ENCODE measurements at regions of chr14 and their contacts with region 1.

Region 1: DNA sequence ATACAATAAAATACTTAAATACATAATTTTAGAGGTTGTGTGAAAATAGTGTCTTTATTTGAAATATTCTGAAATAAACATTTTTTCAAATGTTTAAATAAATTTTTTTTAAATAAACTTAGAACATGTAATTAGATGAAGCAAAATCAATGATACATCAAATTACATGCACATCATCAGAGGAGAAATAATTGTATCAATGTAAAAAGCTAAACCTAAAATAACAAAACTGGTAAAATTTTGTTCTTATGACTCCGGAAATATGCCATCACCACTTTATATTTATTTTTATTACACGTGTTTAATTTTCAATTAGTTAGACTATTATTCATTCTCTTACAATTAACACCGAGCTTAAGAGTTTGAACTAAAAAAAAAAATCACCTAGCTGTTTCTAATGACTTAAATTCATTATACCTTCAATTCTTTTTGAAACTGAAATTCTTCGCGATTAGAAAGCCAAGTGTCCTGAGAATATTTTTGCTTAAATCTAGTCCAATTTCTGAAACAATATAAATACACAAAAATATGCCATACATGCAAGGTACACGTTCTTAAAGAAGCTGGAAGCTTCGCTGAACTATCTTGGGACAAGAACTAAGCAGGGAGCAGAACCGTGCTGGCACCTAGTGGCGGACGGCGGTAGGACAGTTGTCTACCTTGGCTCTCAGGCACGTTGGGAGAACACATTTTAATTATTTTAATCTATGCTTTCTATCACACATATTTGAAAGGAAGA is 230.5 kb downstream of the SLC25A21 start:
- DNase-seq: peak; percentile 67 to 82
- H3K4me3 ChIP-seq: no peak overlapping the region
- H3K4me3 Mint-ChIP-seq: no peak overlapping the region
- H3K27ac Mint-ChIP-seq: peak overlapping the region; percentile 58
- H3K4me1 ChIP-seq: peaks cover 12% of the 10 kb centered on the region
- H3K4me1 Mint-ChIP-seq: peaks cover 12% of the 10 kb centered on the region
- H3K27me3 ChIP-seq: no peaks in the 10 kb centered on the region
- H3K27me3 Mint-ChIP-seq: no peaks in the 10 kb centered on the region
- CTCF ChIP-seq: peak; percentile 94 to 95

Region 2: GRCh38 chr14:36553656-36554260 is 388.2 kb before region 1 on chr14:
- CTCF ChIA-PET with region 1: interaction called, 17 read pairs
- POLR2A ChIA-PET with region 1: no interaction called
- intact Hi-C with region 1: no loop called
- DNase-seq: peak in 1 of 2 experiments; percentile 48
- H3K4me3 ChIP-seq: no peak overlapping the region
- H3K4me3 Mint-ChIP-seq: no peak overlapping the region
- H3K27ac Mint-ChIP-seq: no peak overlapping the region
- H3K4me1 ChIP-seq: no peaks in the 10 kb centered on the region
- H3K4me1 Mint-ChIP-seq: no peaks in the 10 kb centered on the region
- H3K27me3 ChIP-seq: no peaks in the 10 kb centered on the region
- H3K27me3 Mint-ChIP-seq: no peaks in the 10 kb centered on the region
- CTCF ChIP-seq: peak; percentile 65 to 80

Region 3: GRCh38 chr14:36647824-36648753 is 293.9 kb before region 1 on chr14:
- CTCF ChIA-PET with region 1: interaction called, 69 read pairs
- POLR2A ChIA-PET with region 1: interaction called, 4 read pairs
- intact Hi-C with region 1: loop called (anchors 1 kb)
- DNase-seq: peak; percentile 71 to 81
- H3K4me3 ChIP-seq: peak overlapping the region; percentile 59
- H3K4me3 Mint-ChIP-seq: peak overlapping the region; percentile 92
- H3K27ac Mint-ChIP-seq: peak overlapping the region; percentile 85
- H3K4me1 ChIP-seq: 0 out of 2 replicates have a peak, but pooled peaks cover 4% of the 10 kb centered on the region
- H3K4me1 Mint-ChIP-seq: peaks cover 6% of the 10 kb centered on the region
- H3K27me3 ChIP-seq: no peaks in the 10 kb centered on the region; the same call in 1 of the 2 replicates
- H3K27me3 Mint-ChIP-seq: no peaks in the 10 kb centered on the region
- CTCF ChIP-seq: peak; percentile 71 to 72

Region 4: GRCh38 chr14:36655963-36656686 is 285.8 kb before region 1 on chr14:
- CTCF ChIA-PET with region 1: interaction called, 18 read pairs
- POLR2A ChIA-PET with region 1: no interaction called
- intact Hi-C with region 1: loop called (anchors 1 kb)
- DNase-seq: peak; percentile 61 to 71
- H3K4me3 ChIP-seq: peak overlapping the region; percentile 41
- H3K4me3 Mint-ChIP-seq: peak overlapping the region; percentile 68
- H3K27ac Mint-ChIP-seq: no peak overlapping the region
- H3K4me1 ChIP-seq: 0 out of 2 replicates have a peak, but pooled peaks cover 5% of the 10 kb centered on the region
- H3K4me1 Mint-ChIP-seq: no peaks in the 10 kb centered on the region
- H3K27me3 ChIP-seq: no peaks in the 10 kb centered on the region
- H3K27me3 Mint-ChIP-seq: no peaks in the 10 kb centered on the region
- CTCF ChIP-seq: peak; percentile 50 to 64

Region 5: GRCh38 chr14:36661756-36662498 is 280.0 kb before region 1 on chr14 and contains the start of gene PAX9:
- CTCF ChIA-PET with region 1: interaction called, 18 read pairs
- POLR2A ChIA-PET with region 1: no interaction called
- intact Hi-C with region 1: loop called (anchors 1 kb)
- DNase-seq: peak; percentile 93 to 95
- H3K4me3 ChIP-seq: peak within 1 kb of the TSS; percentile 64
- H3K4me3 Mint-ChIP-seq: peak within 1 kb of the TSS; percentile 82
- H3K27ac Mint-ChIP-seq: peak within 1 kb of the TSS; percentile 83
- H3K4me1 ChIP-seq: peaks cover 5% of the 10 kb centered on the region; the same call in 1 of the 2 replicates
- H3K4me1 Mint-ChIP-seq: no peaks in the 10 kb centered on the region
- H3K27me3 ChIP-seq: no peaks in the 10 kb centered on the region
- H3K27me3 Mint-ChIP-seq: no peaks in the 10 kb centered on the region
- CTCF ChIP-seq: no peak
- total RNA-seq, gene PAX9: 6.9 and 7.2 TPM in 2 replicates

Region 6: GRCh38 chr14:36751139-36751538 is 190.8 kb before region 1 on chr14:
- CTCF ChIA-PET with region 1: no interaction called
- POLR2A ChIA-PET with region 1: no interaction called
- intact Hi-C with region 1: loop called (anchors 5 kb)
- DNase-seq: peak in 1 of 2 experiments; percentile 42
- H3K4me3 ChIP-seq: no peak overlapping the region
- H3K4me3 Mint-ChIP-seq: no peak overlapping the region
- H3K27ac Mint-ChIP-seq: no peak overlapping the region
- H3K4me1 ChIP-seq: peaks cover 11% of the 10 kb centered on the region; the same call in 1 of the 2 replicates
- H3K4me1 Mint-ChIP-seq: no peaks in the 10 kb centered on the region
- H3K27me3 ChIP-seq: no peaks in the 10 kb centered on the region
- H3K27me3 Mint-ChIP-seq: no peaks in the 10 kb centered on the region
- CTCF ChIP-seq: no peak

Region 7: GRCh38 chr14:36773136-36773540 is 168.8 kb before region 1 on chr14:
- CTCF ChIA-PET with region 1: interaction called, 15 read pairs
- POLR2A ChIA-PET with region 1: no interaction called
- intact Hi-C with region 1: loop called (anchors 1 kb)
- DNase-seq: peak; percentile 56 to 58
- H3K4me3 ChIP-seq: no peak overlapping the region
- H3K4me3 Mint-ChIP-seq: no peak overlapping the region
- H3K27ac Mint-ChIP-seq: peak overlapping the region; percentile 57
- H3K4me1 ChIP-seq: peaks cover 51% of the 10 kb centered on the region
- H3K4me1 Mint-ChIP-seq: peaks cover 29% of the 10 kb centered on the region
- H3K27me3 ChIP-seq: no peaks in the 10 kb centered on the region
- H3K27me3 Mint-ChIP-seq: no peaks in the 10 kb centered on the region
- CTCF ChIP-seq: peak; percentile 46 to 48